ENCODE measurements at regions of chr2 and their contacts with region 1.

Region 1: GRCh38 chr2:70301344-70302194 is at the start of gene FAM136A:
- DNase-seq: peak; percentile 63 to 89 (median 77)
- H3K4me3 ChIP-seq: peak within 1 kb of the TSS; percentile 69 to 99 (median 92)
- H3K27ac ChIP-seq: peak within 1 kb of the TSS in 58 of 59 donors; percentile 13 to 94 (median 82)
- H3K27me3 ChIP-seq: no peaks in the 10 kb centered on the region
- CTCF ChIP-seq: peak; percentile 74 to 99 (median 94)
- total RNA-seq, gene FAM136A: 9.5 to 27.5 (median 18.9) TPM

Region 2: GRCh38 chr2:70086838-70087701 is 214.5 kb before region 1 on chr2 and contains the start of gene PCBP1:
- intact Hi-C with region 1: loop called in 1 of 2 experiments (anchors 5 kb)
- DNase-seq: peak; percentile 81 to 92 (median 88)
- H3K4me3 ChIP-seq: peak within 1 kb of the TSS; percentile 61 to 99 (median 92)
- H3K27ac ChIP-seq: peak within 1 kb of the TSS; percentile 100
- H3K27me3 ChIP-seq: no peaks in the 10 kb centered on the region
- CTCF ChIP-seq: peak in 2 of 56 donors; percentile 6 to 8
- total RNA-seq, gene PCBP1: 118 to 237 (median 174) TPM

Region 3: DNA sequence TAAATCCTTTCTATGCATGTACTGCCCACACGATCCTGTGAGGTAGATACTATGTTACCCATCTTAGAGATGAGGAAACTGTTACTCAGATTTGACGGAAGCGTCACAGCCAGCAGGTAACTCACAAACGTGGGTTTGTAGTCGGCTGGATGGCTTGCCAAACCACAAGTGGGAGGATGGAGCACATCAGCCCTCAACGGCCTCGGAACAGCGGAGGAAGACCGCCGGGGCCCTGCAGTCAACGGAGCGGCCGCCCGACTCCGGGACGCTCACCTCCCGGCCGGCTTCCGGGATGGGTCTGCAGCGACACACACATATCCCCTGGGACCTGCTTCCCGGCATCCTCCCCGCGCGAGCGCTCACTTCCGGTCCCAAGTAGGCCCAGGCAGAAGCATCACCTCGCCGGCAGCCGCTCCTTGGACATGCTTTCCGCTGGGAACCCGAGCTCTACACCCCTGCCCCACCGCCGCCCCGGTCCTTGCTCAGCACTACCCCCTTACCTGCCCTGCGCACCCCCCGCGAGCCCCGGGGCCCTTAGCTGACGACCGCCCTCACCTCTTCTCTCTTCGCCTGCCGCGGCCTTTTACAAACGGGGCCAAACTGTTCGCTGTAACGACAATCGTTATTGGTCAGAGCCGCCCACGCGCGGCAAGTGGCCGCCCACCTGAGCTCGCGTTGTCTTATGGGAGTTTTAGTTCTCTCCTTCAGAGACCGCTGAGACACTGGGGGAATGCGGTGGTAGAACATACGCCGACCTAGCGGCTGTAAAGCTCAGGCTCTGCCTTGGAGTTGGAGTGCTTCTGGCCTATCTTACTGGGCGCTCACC is 110.9 kb before region 1 on chr2 and contains the start of gene C2orf42:
- intact Hi-C with region 1: loop called (anchors 5 to 10 kb)
- DNase-seq: peak; percentile 93 to 98 (median 96)
- H3K4me3 ChIP-seq: peak within 1 kb of the TSS; percentile 45 to 99 (median 86)
- H3K27ac ChIP-seq: peak within 1 kb of the TSS; percentile 87 to 99 (median 96)
- H3K27me3 ChIP-seq: no peaks in the 10 kb centered on the region
- CTCF ChIP-seq: peak in 30 of 56 donors; percentile 7 to 51 (median 22)
- total RNA-seq, gene C2orf42: 20.6 to 44.6 (median 32.0) TPM

Region 4: DNA sequence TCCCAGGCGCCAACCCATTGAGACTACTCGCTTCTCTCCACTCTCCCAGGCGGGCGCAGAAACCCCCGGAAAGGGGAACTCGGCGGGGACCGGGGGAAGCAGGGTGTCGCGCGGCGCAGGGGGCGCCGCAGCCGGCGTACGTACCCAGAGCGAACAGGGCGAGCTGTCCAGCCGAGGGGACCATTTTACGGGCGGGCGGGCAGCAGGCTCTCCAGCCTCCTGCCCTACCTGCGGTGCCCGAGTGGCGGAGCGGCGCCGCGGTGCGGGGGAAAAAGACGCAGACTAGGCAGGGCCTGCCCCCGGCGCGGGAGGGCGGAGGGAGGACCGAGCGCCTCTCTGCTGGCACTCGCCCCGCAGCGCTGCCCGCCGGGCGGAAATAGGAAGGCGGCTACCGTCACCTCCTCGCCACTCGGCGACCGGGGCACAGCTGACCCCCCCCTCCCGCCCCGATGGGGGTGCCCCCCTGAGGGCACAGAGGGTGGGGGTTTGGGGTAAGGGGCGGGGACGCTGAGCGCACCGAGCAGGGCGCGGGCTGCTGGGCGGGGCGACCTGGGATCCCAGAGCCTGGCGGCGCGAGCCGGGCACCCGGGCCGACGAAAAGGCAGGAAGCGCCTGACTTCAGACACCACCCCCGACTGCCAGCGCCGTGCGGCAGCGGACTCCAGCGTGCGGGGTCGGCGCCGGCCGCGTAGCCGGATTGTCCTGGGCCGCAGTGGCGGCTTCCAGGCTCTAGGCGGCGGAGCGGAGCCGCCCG is 252.2 kb after region 1 on chr2 and contains the start of gene TGFA:
- intact Hi-C with region 1: loop called in 1 of 2 experiments (anchors 5 kb)
- DNase-seq: peak; percentile 54 to 87 (median 75)
- H3K4me3 ChIP-seq: peak within 1 kb of the TSS; percentile 58 to 85 (median 72)
- H3K27ac ChIP-seq: peak within 1 kb of the TSS; percentile 16 to 99 (median 91)
- H3K27me3 ChIP-seq: peaks cover 0 to 52% (median 11%) of the 10 kb centered on the region in 45 donors
- CTCF ChIP-seq: peak in 54 of 56 donors; percentile 27 to 84 (median 68)
- total RNA-seq, gene TGFA: 4.2 to 47.1 (median 12.5) TPM

Region 5: DNA sequence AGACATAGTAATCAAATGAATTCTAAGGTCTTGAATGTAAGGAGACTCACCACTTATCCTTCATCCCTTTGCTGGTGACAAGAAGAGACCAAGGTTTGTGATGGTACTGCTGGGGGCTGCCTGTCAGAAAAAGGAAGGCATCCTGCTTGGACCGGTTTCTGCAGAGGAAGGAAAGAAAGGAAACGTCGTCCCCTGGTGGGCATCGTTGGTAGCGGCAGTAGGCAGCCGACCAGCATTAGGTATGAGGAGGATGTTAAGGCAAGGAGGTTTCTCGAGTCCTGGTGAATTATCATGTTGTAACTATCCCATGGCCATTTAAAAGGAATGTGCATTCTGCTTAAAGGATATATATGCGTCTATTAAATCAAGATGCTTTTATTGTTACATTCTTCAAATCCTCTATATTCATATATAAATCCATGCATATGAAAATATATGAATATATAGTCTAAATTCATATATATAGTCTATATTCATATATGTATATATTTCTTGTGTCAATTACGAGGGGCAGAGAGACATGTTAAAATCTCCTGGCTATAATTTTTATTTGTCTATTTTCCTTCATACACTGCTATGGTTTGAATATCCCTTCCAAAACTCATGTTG is 346.4 kb after region 1 on chr2:
- intact Hi-C with region 1: loop called (anchors 2 to 10 kb)
- DNase-seq: peak in 9 of 10 donors; percentile 59 to 79 (median 67)
- H3K4me3 ChIP-seq: no peak overlapping the region
- H3K27ac ChIP-seq: no peak overlapping the region
- H3K27me3 ChIP-seq: no peaks in the 10 kb centered on the region
- CTCF ChIP-seq: peak; percentile 76 to 99 (median 91)

Region 6: GRCh38 chr2:70948337-70949003 is 646.9 kb after region 1 on chr2:
- intact Hi-C with region 1: loop called in 1 of 2 experiments (anchors 5 kb)
- DNase-seq: peak; percentile 61 to 81 (median 72)
- H3K4me3 ChIP-seq: peak overlapping the region; percentile 7 to 62 (median 40)
- H3K27ac ChIP-seq: no peak overlapping the region
- H3K27me3 ChIP-seq: no peaks in the 10 kb centered on the region
- CTCF ChIP-seq: peak; percentile 30 to 93 (median 84)